ENCODE measurements at regions of chr16 and their contacts with region 1.

Region 1: GRCh38 chr16:56614549-56614991 is 6.2 kb downstream of the MT2A start:
- DNase-seq: peak; percentile 58
- H3K4me3 Mint-ChIP-seq: no peak overlapping the region
- H3K27ac Mint-ChIP-seq: no peak overlapping the region
- H3K4me1 Mint-ChIP-seq: peaks cover 59% of the 10 kb centered on the region
- H3K27me3 Mint-ChIP-seq: peaks cover 20% of the 10 kb centered on the region

Region 2: DNA sequence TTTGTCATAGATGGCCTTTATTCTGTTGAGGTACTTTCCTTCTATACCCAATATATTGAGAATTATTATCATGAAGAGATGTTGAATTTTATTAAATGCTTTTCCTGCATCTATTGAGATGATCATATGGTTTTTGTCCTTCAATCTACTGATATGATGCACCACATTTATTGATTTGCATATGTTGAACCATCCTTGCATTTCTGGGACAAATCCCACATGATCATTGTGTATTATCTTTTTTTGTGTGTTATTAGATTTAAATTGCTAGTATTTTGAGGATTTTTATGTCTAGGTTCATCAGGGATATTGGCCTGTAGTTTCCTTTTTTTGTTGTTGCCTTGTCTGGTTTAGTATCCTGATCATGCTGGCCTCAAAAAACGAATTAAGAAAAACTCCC is 614.9 kb before region 1 on chr16:
- CTCF ChIA-PET with region 1: no interaction called
- intact Hi-C with region 1: no loop called
- DNase-seq: no peak
- H3K4me3 Mint-ChIP-seq: no peak overlapping the region
- H3K27ac Mint-ChIP-seq: no peak overlapping the region
- H3K4me1 Mint-ChIP-seq: no peaks in the 10 kb centered on the region
- H3K27me3 Mint-ChIP-seq: peaks cover 2% of the 10 kb centered on the region

Region 3: GRCh38 chr16:56506941-56507340 is 107.6 kb before region 1 on chr16:
- CTCF ChIA-PET with region 1: no interaction called
- intact Hi-C with region 1: no loop called
- DNase-seq: no peak
- H3K4me3 Mint-ChIP-seq: no peak overlapping the region
- H3K27ac Mint-ChIP-seq: no peak overlapping the region
- H3K4me1 Mint-ChIP-seq: no peaks in the 10 kb centered on the region
- H3K27me3 Mint-ChIP-seq: no peaks in the 10 kb centered on the region

Region 4: DNA sequence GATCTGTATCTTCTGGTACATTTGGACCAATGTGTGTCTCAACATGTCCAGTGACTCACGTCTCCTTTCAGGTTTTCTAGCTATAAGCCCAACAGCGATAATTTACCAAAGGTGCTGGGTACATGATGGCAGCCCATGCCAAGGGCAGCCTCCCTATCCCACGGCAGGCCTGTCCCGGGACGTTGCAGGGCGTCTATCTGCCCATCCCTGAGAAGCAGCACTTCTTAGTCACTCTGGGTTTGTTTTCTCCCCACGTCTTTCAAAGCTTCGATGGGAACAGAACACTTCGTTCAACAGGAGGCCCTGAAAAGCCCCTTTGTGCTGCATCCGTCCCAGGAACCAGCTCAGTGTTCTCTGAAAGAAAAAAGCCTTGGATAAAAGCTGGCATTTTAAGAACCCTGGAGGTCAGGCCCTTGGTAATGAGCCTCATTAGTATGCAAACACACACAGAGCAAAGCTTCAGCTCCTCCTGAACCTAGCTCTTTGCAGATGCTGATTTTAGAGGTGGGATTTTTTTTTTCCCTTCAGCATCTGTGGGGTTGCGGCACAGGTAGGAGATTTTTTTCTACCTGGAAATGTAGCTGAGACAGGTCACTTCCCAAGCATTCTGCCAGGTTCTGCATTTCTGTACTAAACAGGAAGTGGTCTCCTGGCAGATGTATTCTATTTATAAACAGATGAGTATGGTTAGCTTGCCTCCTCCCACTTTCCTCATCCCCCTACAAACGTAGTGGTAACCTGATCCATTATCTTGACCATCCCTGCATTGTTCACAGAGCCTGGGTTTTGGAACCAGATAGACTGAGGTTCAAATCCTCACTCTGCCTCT is 67.2 kb before region 1 on chr16:
- CTCF ChIA-PET with region 1: no interaction called
- intact Hi-C with region 1: no loop called
- DNase-seq: no peak
- H3K4me3 Mint-ChIP-seq: no peak overlapping the region
- H3K27ac Mint-ChIP-seq: no peak overlapping the region
- H3K4me1 Mint-ChIP-seq: peaks cover 17% of the 10 kb centered on the region
- H3K27me3 Mint-ChIP-seq: no peaks in the 10 kb centered on the region

Region 5: GRCh38 chr16:56625140-56625942 is 10.8 kb after region 1 on chr16 and contains the start of gene MT1E:
- CTCF ChIA-PET with region 1: no interaction called
- intact Hi-C with region 1: loop called (anchors 1 kb)
- DNase-seq: peak; percentile 61
- H3K4me3 Mint-ChIP-seq: peak within 1 kb of the TSS; percentile 76
- H3K27ac Mint-ChIP-seq: no peak within 1 kb of the TSS
- H3K4me1 Mint-ChIP-seq: peaks cover 14% of the 10 kb centered on the region
- H3K27me3 Mint-ChIP-seq: peaks cover 25% of the 10 kb centered on the region
- total RNA-seq, gene MT1E: 12.2 to 12.4 TPM

Region 6: DNA sequence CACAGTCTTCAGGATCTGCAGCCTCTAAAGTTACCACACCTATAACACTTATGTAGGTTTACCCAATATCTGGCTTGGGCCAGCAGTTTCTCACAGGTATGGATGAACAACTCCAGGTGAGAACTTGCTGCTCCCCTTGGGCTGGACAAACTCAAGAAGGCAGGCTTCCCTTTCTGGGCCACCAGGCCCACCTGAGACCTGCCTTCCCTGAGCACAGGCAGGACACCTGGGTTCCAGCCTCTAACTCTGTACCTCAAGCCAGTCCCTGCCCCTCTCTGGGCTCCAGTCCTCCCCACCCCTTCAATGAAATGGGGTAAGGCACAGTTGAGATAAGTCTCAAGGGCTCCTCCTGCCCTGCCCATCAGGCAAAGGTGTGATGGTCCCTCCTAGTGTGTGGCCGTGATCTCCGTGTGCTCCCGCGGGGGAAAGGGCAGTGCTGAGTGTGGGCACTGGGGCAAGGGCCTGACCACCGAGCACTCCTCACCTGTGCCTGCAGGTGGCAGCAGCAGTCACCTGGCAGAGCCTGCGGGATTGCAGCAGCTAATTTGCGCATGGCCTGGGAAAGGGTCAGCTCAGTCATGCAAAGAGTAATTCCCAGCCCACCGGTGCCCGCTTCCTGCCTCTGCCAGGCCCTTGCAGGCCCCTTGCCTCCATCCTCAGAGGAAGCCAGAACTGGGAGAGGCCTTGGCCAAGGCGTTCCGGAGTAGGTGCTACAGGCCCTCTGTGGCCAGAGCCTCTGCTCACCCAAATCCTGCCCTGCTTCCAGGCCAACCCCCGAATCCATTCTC is 985.7 kb after region 1 on chr16:
- CTCF ChIA-PET with region 1: no interaction called
- intact Hi-C with region 1: loop called (anchors 2 kb)
- DNase-seq: peak; percentile 65
- H3K4me3 Mint-ChIP-seq: no peak overlapping the region
- H3K27ac Mint-ChIP-seq: no peak overlapping the region
- H3K4me1 Mint-ChIP-seq: peaks cover 25% of the 10 kb centered on the region
- H3K27me3 Mint-ChIP-seq: no peaks in the 10 kb centered on the region

Measured in activated naive CD4-positive, alpha-beta T cell treated with anti-CD3 and anti-CD28 coated beads for 36 hours (primary cell).